Naive thymus-derived CD8-positive, alpha-beta T cell (primary cell): ENCODE measurements at regions of chr14 and their contacts with region 1.

Region 1: DNA sequence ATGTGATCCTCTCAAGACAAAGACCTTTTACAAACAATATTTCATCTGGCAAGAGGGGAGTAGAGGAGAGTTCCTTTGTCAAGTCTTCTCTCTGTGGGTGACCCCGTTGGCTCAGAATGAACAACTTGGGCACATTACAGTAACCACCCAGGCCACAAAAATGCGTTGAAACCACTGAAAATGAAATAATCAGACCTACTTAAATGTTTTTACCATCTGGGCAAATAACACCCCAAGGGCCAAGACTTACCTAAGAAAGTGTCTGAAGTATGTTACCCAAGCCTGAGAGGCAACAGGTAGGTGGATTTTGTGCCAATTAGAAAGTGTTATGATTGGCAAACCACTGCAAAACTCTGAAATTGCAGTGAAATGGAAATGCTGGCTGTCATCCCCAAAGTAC is 1.3 kb downstream of the TC2N start:
- DNase-seq: peak in 2 of 10 donors; percentile 35 to 47
- ATAC-seq: peak in 1 of 2 donors; percentile 7
- H3K4me3 Mint-ChIP-seq: peak overlapping the region; percentile 82 to 99 (median 95)
- H3K27ac Mint-ChIP-seq: peak overlapping the region; percentile 96 to 100 (median 98)
- H3K4me1 Mint-ChIP-seq: peaks cover 33 to 91% (median 86%) of the 10 kb centered on the region in 4 donors
- H3K27me3 Mint-ChIP-seq: no peaks in the 10 kb centered on the region

Region 2: GRCh38 chr14:91836119-91836881 is 29.8 kb before region 1 on chr14:
- POLR2A ChIA-PET with region 1: interaction called, 55 read pairs
- DNase-seq: peak; percentile 74 to 98 (median 86)
- ATAC-seq: peak; percentile 77 to 89
- H3K4me3 Mint-ChIP-seq: peak overlapping the region; percentile 78 to 94 (median 90)
- H3K27ac Mint-ChIP-seq: peak overlapping the region; percentile 74 to 96 (median 92)
- H3K4me1 Mint-ChIP-seq: peaks cover 28 to 81% (median 74%) of the 10 kb centered on the region in 4 donors
- H3K27me3 Mint-ChIP-seq: no peaks in the 10 kb centered on the region

Region 3: DNA sequence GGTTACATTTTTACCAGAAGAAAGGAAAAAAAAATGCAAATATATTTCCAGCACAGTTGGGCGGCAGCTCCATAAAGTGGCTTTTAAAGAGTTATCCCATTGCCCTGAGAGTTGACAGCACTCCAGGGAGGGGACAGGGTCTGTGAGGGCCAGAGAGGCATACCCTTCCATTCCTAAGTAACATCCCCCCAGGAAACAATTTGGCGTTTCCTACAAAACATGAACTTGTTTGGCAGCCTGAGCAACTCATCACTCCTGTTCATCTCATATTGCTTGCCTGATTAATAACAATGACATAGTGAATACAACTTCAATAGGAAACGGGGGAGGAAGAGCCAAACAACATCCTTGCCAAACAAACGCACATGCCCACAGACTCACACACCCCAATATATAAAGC is 22.0 kb before region 1 on chr14:
- POLR2A ChIA-PET with region 1: interaction called, 18 read pairs
- DNase-seq: no peak
- ATAC-seq: no peak
- H3K4me3 Mint-ChIP-seq: no peak overlapping the region
- H3K27ac Mint-ChIP-seq: peak overlapping the region in 4 of 10 donors; percentile 2 to 56 (median 51)
- H3K4me1 Mint-ChIP-seq: peaks cover 27 to 87% (median 72%) of the 10 kb centered on the region in 4 donors
- H3K27me3 Mint-ChIP-seq: no peaks in the 10 kb centered on the region

Region 4: DNA sequence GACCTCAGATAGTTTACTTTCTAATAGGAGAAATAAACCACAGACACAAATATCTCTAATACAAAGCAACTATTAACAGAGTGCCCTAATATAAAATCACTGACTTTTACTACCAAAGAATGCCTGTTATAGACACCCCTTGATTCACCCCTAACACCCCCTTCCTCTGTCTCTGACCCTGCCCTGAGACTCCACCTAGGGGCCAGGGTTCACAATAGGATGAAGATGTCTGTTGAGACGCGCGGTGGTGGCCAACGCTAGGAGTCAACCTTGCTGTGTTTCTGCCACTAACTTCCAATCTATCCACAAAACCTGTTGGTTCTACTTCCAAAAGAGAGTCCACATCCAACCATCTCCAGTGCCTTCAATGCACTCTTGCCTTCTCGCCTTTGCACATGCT is 12.2 kb after region 1 on chr14:
- POLR2A ChIA-PET with region 1: interaction called, 150 read pairs
- DNase-seq: peak in 1 of 10 donors; percentile 65
- ATAC-seq: no peak
- H3K4me3 Mint-ChIP-seq: peak overlapping the region in 1 of 10 donors; percentile 15
- H3K27ac Mint-ChIP-seq: peak overlapping the region in 8 of 10 donors; percentile 1 to 97 (median 88)
- H3K4me1 Mint-ChIP-seq: peaks cover 49 to 92% (median 79%) of the 10 kb centered on the region in 4 donors
- H3K27me3 Mint-ChIP-seq: no peaks in the 10 kb centered on the region

Region 5: DNA sequence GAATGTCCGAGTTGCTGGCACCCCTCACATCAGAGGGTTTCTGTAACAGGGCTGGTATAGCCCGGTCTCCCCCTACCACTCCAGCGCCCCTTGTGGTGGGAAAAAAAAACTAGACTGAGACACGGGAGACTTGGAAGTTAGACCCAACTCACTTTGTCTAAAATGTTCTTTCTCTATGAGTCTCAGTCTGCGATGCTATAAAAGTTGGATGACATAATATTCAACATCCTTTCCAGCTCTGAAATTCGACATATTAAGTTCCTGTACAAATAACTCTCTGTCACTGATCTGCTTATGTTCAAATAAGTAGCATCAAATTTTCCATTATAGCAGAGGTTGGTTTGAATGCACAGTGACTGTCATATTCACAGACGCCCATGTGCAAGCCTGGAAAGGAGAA is 26.9 kb after region 1 on chr14:
- POLR2A ChIA-PET with region 1: interaction called, 317 read pairs
- DNase-seq: peak in 1 of 10 donors; percentile 23
- ATAC-seq: no peak
- H3K4me3 Mint-ChIP-seq: peak overlapping the region in 1 of 10 donors; percentile 8
- H3K27ac Mint-ChIP-seq: peak overlapping the region; percentile 23 to 95 (median 74)
- H3K4me1 Mint-ChIP-seq: peaks cover 38 to 79% (median 61%) of the 10 kb centered on the region in 4 donors
- H3K27me3 Mint-ChIP-seq: no peaks in the 10 kb centered on the region

Region 6: DNA sequence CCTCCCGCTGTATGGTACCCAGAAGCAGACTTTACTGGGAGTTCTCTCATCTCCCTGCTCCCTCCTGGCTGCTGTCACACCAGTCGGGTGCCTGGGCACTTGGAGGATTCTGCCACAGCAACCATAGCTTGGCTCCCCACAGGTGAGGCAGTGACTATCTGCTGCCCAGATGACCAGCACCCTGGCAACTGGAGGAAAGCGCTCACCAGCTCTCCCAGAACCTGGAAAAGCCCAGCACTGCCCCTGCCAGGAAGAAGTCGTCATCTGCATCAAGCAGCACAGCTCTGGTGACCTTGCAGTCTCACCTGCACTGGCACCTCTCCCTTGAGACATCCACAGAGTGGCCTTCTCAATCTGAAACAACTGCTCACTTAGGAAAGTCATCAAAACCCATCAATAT is 33.2 kb after region 1 on chr14:
- POLR2A ChIA-PET with region 1: interaction called, 317 read pairs
- DNase-seq: peak in 2 of 10 donors; percentile 29 to 73
- ATAC-seq: peak in 1 of 2 donors; percentile 78
- H3K4me3 Mint-ChIP-seq: no peak overlapping the region
- H3K27ac Mint-ChIP-seq: peak overlapping the region in 5 of 10 donors; percentile 38 to 76 (median 62)
- H3K4me1 Mint-ChIP-seq: peaks cover 3 to 35% (median 15%) of the 10 kb centered on the region in 4 donors
- H3K27me3 Mint-ChIP-seq: no peaks in the 10 kb centered on the region

Region 7: DNA sequence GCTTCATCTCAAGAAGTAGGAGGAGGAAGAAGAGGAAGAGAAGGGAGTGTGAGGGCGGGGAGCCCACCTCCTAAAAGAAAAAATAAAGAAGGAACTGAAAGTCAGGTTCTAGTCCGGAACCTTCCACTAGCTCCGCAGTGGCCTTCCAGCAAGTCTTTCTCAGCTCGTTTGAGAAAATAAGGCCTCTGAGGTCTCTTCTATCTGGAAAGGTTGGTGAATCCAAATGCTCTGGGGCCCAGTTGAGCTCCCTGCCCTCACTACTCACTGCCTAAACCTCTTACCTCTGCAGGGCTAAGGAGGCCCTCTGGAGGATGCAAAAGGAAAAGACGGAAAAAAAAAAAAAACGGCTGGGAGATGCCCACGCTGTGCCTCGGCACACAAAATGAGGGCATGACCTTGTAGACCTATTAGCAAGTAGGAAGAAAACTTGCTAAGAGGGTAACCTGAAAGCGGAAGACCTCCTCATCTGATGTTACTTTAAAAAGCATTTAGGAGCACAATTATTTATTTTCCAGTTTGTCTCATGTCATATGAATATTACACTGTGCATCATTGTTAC is 45.5 kb after region 1 on chr14:
- POLR2A ChIA-PET with region 1: interaction called, 15 read pairs
- DNase-seq: peak; percentile 12 to 73 (median 48)
- ATAC-seq: peak; percentile 90 to 92
- H3K4me3 Mint-ChIP-seq: peak overlapping the region in 7 of 10 donors; percentile 1 to 51 (median 39)
- H3K27ac Mint-ChIP-seq: peak overlapping the region; percentile 22 to 87 (median 72)
- H3K4me1 Mint-ChIP-seq: peaks cover 11 to 33% (median 23%) of the 10 kb centered on the region in 4 donors
- H3K27me3 Mint-ChIP-seq: no peaks in the 10 kb centered on the region